ENCODE measurements at regions of chr17 and their contacts with region 1.

Region 1: GRCh38 chr17:37047631-37048104 is 98.9 kb downstream of the AATF start:
- DNase-seq: peak; percentile 84
- ATAC-seq: peak; percentile 80
- H3K4me3 ChIP-seq: no peak overlapping the region
- H3K27ac ChIP-seq: no peak overlapping the region
- H3K4me1 ChIP-seq: no peaks in the 10 kb centered on the region
- H3K27me3 ChIP-seq: no peaks in the 10 kb centered on the region
- CTCF ChIP-seq: peak; percentile 86

Region 2: GRCh38 chr17:36978810-36979564 is 68.7 kb before region 1 on chr17:
- CTCF ChIA-PET with region 1: no interaction called
- POLR2A ChIA-PET with region 1: no interaction called
- intact Hi-C with region 1: loop called (anchors 5 kb)
- DNase-seq: no peak
- ATAC-seq: no peak
- H3K4me3 ChIP-seq: no peak overlapping the region
- H3K27ac ChIP-seq: no peak overlapping the region
- H3K4me1 ChIP-seq: peaks cover 11% of the 10 kb centered on the region; the same call in 1 of the 2 replicates
- H3K27me3 ChIP-seq: peaks cover 8% of the 10 kb centered on the region; the same call in 1 of the 2 replicates
- CTCF ChIP-seq: no peak

Region 3: GRCh38 chr17:37233036-37233435 is 185.4 kb after region 1 on chr17:
- CTCF ChIA-PET with region 1: no interaction called
- POLR2A ChIA-PET with region 1: no interaction called
- intact Hi-C with region 1: no loop called
- DNase-seq: no peak
- ATAC-seq: no peak
- H3K4me3 ChIP-seq: no peak overlapping the region
- H3K27ac ChIP-seq: no peak overlapping the region
- H3K4me1 ChIP-seq: no peaks in the 10 kb centered on the region
- H3K27me3 ChIP-seq: no peaks in the 10 kb centered on the region
- CTCF ChIP-seq: no peak

Region 4: GRCh38 chr17:37570527-37571093 is 522.9 kb after region 1 on chr17:
- CTCF ChIA-PET with region 1: no interaction called
- POLR2A ChIA-PET with region 1: no interaction called
- intact Hi-C with region 1: no loop called
- DNase-seq: peak; percentile 90
- ATAC-seq: peak; percentile 100
- H3K4me3 ChIP-seq: no peak overlapping the region
- H3K27ac ChIP-seq: no peak overlapping the region
- H3K4me1 ChIP-seq: peaks cover 5% of the 10 kb centered on the region; the same call in 1 of the 2 replicates
- H3K27me3 ChIP-seq: no peaks in the 10 kb centered on the region
- CTCF ChIP-seq: peak; percentile 80

Measured in PC-3 (cell line).